Cardiac septum (tissue), 1 donor: ENCODE measurements at regions of chr14 and their contacts with region 1.

Region 1: GRCh38 chr14:35341446-35342159 is 49.4 kb downstream of the PSMA6 start:
- DNase-seq: peak; percentile 95

Region 2: GRCh38 chr14:35201066-35201465 is 140.5 kb before region 1 on chr14:
- intact Hi-C with region 1: no loop called
- DNase-seq: no peak

Region 3: DNA sequence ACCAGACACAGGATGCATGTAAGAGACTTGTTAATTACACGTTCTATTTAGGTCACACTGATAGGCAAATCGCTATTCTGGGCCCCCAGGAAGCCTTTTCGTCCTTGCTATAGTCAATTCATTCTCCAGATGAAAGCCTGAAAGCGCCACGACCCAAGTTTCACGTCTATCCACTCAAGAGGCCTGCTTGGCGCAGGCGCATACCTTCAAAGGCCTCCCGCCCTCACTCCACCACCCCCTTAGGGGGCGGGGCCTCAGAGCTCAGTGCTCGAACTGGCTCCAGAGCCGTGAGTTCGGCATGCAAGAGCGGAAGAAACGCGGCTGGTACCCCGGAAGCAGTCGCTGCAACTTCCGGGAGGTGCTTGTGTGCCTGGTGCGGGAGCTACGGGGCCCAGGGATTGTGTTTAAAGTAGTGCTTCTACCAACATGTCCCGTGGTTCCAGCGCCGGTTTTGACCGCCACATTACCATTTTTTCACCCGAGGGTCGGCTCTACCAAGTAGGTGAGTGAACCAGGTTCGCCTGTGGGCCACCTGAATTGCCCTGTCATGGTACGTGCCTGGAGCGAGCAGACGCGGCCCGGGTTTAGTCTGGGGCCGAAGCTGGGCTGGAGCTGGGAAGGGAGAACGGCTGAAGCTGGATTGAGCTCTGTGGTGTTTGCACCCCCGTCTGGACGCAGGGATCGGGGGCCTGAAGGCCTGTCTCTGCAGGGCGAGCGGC is 49.4 kb before region 1 on chr14 and contains the start of gene PSMA6:
- intact Hi-C with region 1: loop called (anchors 2 kb)
- DNase-seq: peak; percentile 99
- total RNA-seq, gene PSMA6: 125 TPM

Region 4: GRCh38 chr14:35365130-35366055 is 23.8 kb after region 1 on chr14:
- intact Hi-C with region 1: loop called (anchors 2 kb)
- DNase-seq: peak; percentile 86

Region 5: DNA sequence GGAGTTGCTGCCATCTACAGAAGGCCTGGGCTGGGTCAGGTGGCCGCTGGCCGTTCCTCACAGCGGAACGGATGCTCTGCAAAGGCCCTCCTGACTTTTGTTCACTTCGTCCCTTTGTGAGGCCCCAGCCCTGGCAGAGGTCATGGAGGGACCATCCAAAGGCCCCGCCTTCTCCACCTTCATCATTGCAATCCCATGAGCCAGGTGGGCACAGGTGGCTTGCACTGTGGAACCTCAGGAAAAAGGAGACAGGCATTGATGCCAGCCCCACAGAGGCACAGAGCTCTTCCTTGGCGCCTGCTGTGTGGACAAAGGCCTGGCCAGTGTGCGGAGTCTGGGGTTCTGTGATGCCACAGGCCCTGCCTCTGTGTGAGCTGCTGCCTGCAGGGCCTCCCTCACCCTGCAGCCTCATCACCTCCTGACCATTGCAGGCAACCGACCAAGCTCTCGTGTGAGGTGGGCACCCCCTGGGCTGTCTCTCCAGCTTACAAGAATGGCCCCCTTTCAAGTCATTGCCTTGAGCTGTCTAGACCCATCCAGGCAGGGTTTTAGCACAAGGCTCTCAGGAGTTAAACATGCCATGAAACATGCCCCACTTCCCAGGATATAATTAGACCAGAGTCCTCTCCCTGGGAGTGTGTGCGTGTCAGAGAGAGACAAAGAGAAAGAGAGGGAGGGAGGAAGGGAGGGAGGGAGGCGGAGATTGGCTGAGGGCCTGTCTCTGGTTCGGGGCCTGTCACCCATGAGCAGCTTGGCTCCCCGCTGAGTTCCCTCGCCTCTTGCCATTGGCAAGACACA is 43.6 kb after region 1 on chr14:
- intact Hi-C with region 1: loop called (anchors 5 kb)
- DNase-seq: peak; percentile 86